AG04449 (cell line): ENCODE measurements at regions of chr14 and their contacts with region 1.

Region 1: DNA sequence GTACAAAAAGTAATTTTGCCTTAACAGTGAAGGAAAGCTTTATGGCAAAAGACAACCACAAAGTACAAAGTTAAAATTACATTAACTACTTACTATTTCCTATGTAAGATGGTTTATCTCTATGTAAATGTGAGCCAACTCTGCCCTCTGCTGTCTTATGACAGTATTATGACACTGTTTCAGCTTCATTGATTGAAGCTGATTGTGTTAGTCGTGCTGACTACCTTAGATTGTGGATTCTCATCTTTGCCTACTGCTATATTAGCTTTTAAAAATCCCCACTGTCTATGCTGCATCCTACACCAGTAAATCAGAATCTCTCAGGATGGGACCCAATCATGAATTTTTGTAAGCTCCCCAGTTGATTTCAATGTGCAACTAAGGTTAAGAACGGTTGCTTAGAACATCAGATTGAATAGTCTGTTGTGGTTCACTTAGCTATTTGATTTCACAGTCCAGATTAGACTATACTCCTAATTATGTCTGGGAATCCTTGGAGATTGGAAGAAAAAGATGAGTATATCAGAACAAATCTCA is 12.2 kb upstream of the SPTB start:
- DNase-seq: peak; percentile 38
- H3K4me3 ChIP-seq: no peak overlapping the region
- CTCF ChIP-seq: peak; percentile 38

Region 2: GRCh38 chr14:64663174-64663573 is 228.7 kb before region 1 on chr14:
- CTCF ChIA-PET with region 1: interaction called, 91 read pairs
- POLR2A ChIA-PET with region 1: no interaction called
- DNase-seq: no peak
- H3K4me3 ChIP-seq: no peak overlapping the region
- CTCF ChIP-seq: no peak

Region 3: GRCh38 chr14:64764641-64765520 is 127.0 kb before region 1 on chr14:
- CTCF ChIA-PET with region 1: interaction called, 94 read pairs
- POLR2A ChIA-PET with region 1: no interaction called
- DNase-seq: no peak
- H3K4me3 ChIP-seq: peak overlapping the region; percentile 41
- CTCF ChIP-seq: peak; percentile 97

Region 4: DNA sequence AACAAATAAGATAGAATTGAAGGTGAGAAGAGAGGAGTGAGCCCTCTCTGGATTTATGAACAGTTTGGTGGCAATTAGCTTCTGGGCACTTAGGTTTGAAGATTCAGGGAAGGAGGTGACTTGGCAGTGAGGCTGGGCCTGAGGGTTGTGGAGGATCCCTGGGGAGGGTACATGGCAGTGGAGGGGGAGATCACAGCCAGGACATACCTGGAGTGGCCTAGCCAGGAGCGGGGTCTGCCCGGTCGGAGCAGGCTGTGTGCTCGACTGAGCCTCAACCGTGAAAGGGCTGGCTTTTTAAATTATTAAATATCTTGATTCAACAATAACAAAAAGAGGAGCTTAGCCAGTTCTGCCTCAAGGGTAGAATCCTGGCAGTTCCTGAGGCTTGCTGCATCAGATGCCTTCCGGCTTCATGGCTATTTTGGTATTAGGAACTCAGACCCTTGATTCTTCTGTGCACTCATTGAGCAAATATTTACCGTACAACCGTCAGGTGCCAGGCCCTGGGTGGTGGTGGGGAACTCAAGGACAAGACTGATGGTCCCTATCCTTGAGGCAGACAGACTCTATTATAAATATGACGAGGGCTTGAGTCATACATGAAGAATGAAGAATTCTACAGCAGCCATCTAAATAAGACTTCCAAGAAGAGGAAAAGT is 85.6 kb before region 1 on chr14:
- CTCF ChIA-PET with region 1: interaction called, 221 read pairs
- POLR2A ChIA-PET with region 1: interaction called, 4 read pairs
- DNase-seq: peak; percentile 75
- H3K4me3 ChIP-seq: peak overlapping the region; percentile 12
- CTCF ChIP-seq: no peak

Region 5: GRCh38 chr14:64841121-64841651 is 50.7 kb before region 1 on chr14:
- CTCF ChIA-PET with region 1: interaction called, 22 read pairs
- POLR2A ChIA-PET with region 1: no interaction called
- DNase-seq: peak; percentile 34
- H3K4me3 ChIP-seq: no peak overlapping the region
- CTCF ChIP-seq: peak; percentile 51

Region 6: DNA sequence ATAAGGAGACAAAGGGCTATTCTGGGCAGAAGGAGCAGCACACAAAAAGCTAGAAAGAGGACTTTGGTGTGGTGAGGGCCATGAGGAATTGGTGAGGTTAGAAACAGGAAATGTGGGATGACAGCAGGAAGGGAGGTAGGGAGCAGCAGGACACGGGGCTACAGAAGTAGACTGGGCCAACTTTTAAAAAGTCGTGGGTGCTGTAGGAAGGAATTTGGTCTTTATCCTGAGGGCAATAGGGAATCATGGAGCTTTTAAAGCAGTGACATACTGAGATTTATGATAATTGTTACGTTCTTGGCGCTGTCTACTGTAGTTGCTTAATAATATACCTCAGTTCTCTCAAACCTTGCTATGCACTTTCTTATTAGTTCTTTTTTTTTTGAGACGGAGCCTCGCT is 14.1 kb after region 1 on chr14:
- CTCF ChIA-PET with region 1: interaction called, 26 read pairs
- POLR2A ChIA-PET with region 1: no interaction called
- DNase-seq: no peak
- H3K4me3 ChIP-seq: no peak overlapping the region
- CTCF ChIP-seq: no peak